CD4-positive, alpha-beta T cell (primary cell): ENCODE measurements at regions of chr3 and their contacts with region 1.

Region 1: GRCh38 chr3:100400780-100401673 is at the starts of genes LNP1 and TOMM70:
- DNase-seq: peak; percentile 86 to 97 (median 92)
- ATAC-seq: peak; percentile 88
- H3K4me3 ChIP-seq: peak within 1 kb of the TSS; percentile 73
- H3K4me3 Mint-ChIP-seq: peak within 1 kb of the TSS; percentile 94
- H3K27ac ChIP-seq: peak within 1 kb of the TSS; percentile 76 to 85
- H3K27ac Mint-ChIP-seq: peak within 1 kb of the TSS; percentile 92
- H3K4me1 ChIP-seq: peaks cover 26% of the 10 kb centered on the region
- H3K4me1 Mint-ChIP-seq: peaks cover 84% of the 10 kb centered on the region
- H3K27me3 ChIP-seq: no peaks in the 10 kb centered on the region
- H3K27me3 Mint-ChIP-seq: no peaks in the 10 kb centered on the region
- CTCF ChIP-seq: no peak
- total RNA-seq, gene LNP1: 0.47 to 0.70 TPM
- total RNA-seq, gene TOMM70: 20.9 to 21.6 TPM

Region 2: DNA sequence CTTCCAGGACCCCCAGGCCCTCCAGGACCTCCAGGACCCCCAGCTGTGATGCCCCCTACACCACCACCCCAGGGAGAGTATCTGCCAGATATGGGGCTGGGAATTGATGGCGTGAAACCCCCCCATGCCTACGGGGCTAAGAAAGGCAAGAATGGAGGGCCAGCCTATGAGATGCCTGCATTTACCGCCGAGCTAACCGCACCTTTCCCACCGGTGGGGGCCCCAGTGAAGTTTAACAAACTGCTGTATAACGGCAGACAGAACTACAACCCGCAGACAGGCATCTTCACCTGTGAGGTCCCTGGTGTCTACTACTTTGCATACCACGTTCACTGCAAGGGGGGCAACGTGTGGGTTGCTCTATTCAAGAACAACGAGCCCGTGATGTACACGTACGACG is 605.5 kb before region 1 on chr3:
- CTCF ChIA-PET with region 1: no interaction called
- POLR2A ChIA-PET with region 1: no interaction called
- intact Hi-C with region 1: no loop called
- DNase-seq: no peak
- ATAC-seq: no peak
- H3K4me3 ChIP-seq: no peak overlapping the region
- H3K4me3 Mint-ChIP-seq: no peak overlapping the region
- H3K27ac ChIP-seq: no peak overlapping the region
- H3K27ac Mint-ChIP-seq: no peak overlapping the region
- H3K4me1 ChIP-seq: no peaks in the 10 kb centered on the region
- H3K4me1 Mint-ChIP-seq: no peaks in the 10 kb centered on the region
- H3K27me3 ChIP-seq: no peaks in the 10 kb centered on the region
- H3K27me3 Mint-ChIP-seq: no peaks in the 10 kb centered on the region
- CTCF ChIP-seq: no peak

Region 3: GRCh38 chr3:99817437-99818240 is 583.4 kb before region 1 on chr3 and contains the start of gene CMSS1:
- CTCF ChIA-PET with region 1: no interaction called
- POLR2A ChIA-PET with region 1: interaction called, 7 read pairs
- intact Hi-C with region 1: loop called (anchors 1 to 10 kb)
- DNase-seq: peak; percentile 90 to 98 (median 96)
- ATAC-seq: peak; percentile 80
- H3K4me3 ChIP-seq: peak within 1 kb of the TSS; percentile 71
- H3K4me3 Mint-ChIP-seq: peak within 1 kb of the TSS; percentile 97
- H3K27ac ChIP-seq: peak within 1 kb of the TSS; percentile 76 to 86
- H3K27ac Mint-ChIP-seq: peak within 1 kb of the TSS; percentile 100
- H3K4me1 ChIP-seq: peaks cover 15% of the 10 kb centered on the region
- H3K4me1 Mint-ChIP-seq: peaks cover 48% of the 10 kb centered on the region
- H3K27me3 ChIP-seq: no peaks in the 10 kb centered on the region
- H3K27me3 Mint-ChIP-seq: no peaks in the 10 kb centered on the region
- CTCF ChIP-seq: no peak
- total RNA-seq, gene CMSS1: 12.2 TPM

Region 4: DNA sequence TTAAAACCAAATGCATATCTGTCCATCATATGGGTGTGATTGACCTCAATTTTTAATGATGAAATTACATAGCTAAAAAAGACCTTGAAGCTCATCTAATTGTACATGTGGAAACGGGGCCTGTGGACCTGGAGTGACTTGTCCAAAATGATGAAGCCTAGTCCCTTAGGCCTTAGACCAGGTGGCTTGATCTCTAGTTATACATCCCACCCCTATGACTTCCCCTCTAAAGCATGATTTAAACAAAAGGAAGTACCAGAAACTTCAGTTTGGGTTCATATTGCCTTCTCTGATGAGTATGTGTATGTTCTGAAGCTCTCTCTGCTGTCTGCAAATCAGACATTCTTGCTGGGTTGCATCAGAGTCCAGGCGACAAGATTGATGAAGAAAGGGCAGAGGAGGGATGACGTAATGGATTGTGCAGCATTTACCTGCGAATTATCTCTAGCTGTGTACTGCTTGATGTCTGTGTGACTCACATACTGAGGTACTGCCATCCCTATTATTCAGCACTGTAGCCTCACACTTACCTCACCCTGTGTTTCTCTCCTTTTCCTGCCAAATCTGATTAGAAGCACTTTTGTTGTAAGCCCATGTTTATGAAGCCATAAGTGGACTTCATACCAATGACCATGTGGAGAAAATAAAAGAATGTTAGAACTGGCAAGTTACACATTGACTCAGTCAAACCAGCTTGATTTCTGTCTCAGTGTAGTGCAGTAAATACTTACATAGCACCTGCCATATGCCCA is 398.3 kb before region 1 on chr3:
- CTCF ChIA-PET with region 1: no interaction called
- POLR2A ChIA-PET with region 1: no interaction called
- intact Hi-C with region 1: no loop called
- DNase-seq: no peak
- ATAC-seq: no peak
- H3K4me3 ChIP-seq: no peak overlapping the region
- H3K4me3 Mint-ChIP-seq: no peak overlapping the region
- H3K27ac ChIP-seq: no peak overlapping the region
- H3K27ac Mint-ChIP-seq: no peak overlapping the region
- H3K4me1 ChIP-seq: no peaks in the 10 kb centered on the region
- H3K4me1 Mint-ChIP-seq: no peaks in the 10 kb centered on the region
- H3K27me3 ChIP-seq: no peaks in the 10 kb centered on the region
- H3K27me3 Mint-ChIP-seq: no peaks in the 10 kb centered on the region
- CTCF ChIP-seq: no peak

Region 5: DNA sequence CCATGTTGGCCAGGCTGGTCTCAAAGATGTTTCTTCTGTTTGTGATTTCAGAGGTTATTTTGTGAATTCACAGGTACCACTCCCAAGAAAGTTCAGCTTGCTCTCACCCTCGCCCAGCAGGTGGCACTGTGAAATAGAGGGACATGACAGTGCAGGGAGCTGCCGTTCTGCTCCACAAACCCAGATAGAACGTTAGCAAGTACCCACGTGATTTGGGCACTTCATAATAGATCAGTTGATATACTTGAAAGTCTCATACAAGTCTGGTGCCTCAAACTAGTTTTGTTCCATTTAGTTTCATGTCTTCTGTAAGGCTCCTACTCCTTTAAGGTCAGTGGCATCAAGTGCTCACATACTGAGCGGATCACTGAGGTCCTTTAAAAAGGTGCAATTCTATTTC is 332.2 kb before region 1 on chr3:
- CTCF ChIA-PET with region 1: no interaction called
- POLR2A ChIA-PET with region 1: no interaction called
- intact Hi-C with region 1: no loop called
- DNase-seq: peak; percentile 57 to 84 (median 68)
- ATAC-seq: peak; percentile 98
- H3K4me3 ChIP-seq: no peak overlapping the region
- H3K4me3 Mint-ChIP-seq: no peak overlapping the region
- H3K27ac ChIP-seq: no peak overlapping the region
- H3K27ac Mint-ChIP-seq: no peak overlapping the region
- H3K4me1 ChIP-seq: peaks cover 14% of the 10 kb centered on the region
- H3K4me1 Mint-ChIP-seq: peaks cover 39% of the 10 kb centered on the region
- H3K27me3 ChIP-seq: no peaks in the 10 kb centered on the region
- H3K27me3 Mint-ChIP-seq: no peaks in the 10 kb centered on the region
- CTCF ChIP-seq: peak; percentile 76

Region 6: GRCh38 chr3:100334488-100335351 is 66.3 kb before region 1 on chr3 and contains the start of gene NIT2:
- CTCF ChIA-PET with region 1: no interaction called
- POLR2A ChIA-PET with region 1: interaction called, 28 read pairs
- intact Hi-C with region 1: loop called (anchors 2 to 5 kb)
- DNase-seq: peak; percentile 59 to 91 (median 74)
- ATAC-seq: peak; percentile 94
- H3K4me3 ChIP-seq: peak within 1 kb of the TSS; percentile 81
- H3K4me3 Mint-ChIP-seq: peak within 1 kb of the TSS; percentile 93
- H3K27ac ChIP-seq: peak within 1 kb of the TSS; percentile 29 to 70
- H3K27ac Mint-ChIP-seq: peak within 1 kb of the TSS; percentile 83
- H3K4me1 ChIP-seq: peaks cover 17% of the 10 kb centered on the region
- H3K4me1 Mint-ChIP-seq: peaks cover 30% of the 10 kb centered on the region
- H3K27me3 ChIP-seq: no peaks in the 10 kb centered on the region
- H3K27me3 Mint-ChIP-seq: no peaks in the 10 kb centered on the region
- CTCF ChIP-seq: no peak
- total RNA-seq, gene NIT2: 18.6 to 21.4 TPM

Region 7: DNA sequence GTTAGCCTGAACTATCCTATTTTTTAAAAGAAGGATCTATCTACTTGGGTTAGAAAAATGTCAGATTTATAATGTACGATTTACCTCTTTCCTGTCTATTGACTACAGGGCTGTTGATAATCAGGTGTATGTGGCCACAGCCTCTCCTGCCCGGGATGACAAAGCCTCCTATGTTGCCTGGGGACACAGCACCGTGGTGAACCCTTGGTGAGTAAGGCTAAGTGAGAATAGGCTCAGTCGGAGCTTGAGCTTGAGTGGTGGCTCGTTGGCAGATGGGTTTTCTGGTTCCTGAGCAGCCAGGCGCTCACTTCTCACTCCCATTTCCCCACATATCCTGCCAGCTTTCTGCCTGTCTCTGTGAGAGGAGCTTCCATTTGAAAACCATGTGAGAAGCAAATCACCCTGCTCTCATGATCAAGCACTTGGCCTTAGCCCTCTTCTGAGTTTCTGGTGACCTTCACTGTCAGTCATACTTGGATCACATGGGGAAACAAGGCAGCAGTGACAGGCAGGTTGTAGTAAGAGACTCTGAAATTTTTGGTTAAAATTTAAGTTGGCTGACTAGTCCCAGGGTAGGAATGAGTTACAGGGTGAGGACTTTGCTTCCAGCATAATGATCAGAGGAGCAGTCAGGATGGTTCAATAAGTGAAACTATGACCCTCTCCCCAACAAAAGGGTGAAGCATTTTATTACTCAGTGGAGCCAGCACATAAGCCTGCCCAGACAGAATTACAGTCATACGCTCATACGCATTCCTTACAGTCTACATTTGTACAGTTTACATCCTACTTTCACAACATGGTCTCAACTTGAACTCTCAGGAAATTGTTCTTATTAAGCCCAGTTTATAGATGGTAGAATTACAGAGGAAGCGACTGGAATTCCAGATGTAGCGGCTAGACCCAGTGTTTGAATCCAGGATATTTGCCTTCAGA is 48.5 kb before region 1 on chr3:
- CTCF ChIA-PET with region 1: no interaction called
- POLR2A ChIA-PET with region 1: no interaction called
- intact Hi-C with region 1: no loop called
- DNase-seq: no peak
- ATAC-seq: no peak
- H3K4me3 ChIP-seq: no peak overlapping the region
- H3K4me3 Mint-ChIP-seq: no peak overlapping the region
- H3K27ac ChIP-seq: no peak overlapping the region
- H3K27ac Mint-ChIP-seq: no peak overlapping the region
- H3K4me1 ChIP-seq: no peaks in the 10 kb centered on the region
- H3K4me1 Mint-ChIP-seq: no peaks in the 10 kb centered on the region
- H3K27me3 ChIP-seq: no peaks in the 10 kb centered on the region
- H3K27me3 Mint-ChIP-seq: no peaks in the 10 kb centered on the region
- CTCF ChIP-seq: no peak

Region 8: GRCh38 chr3:100386437-100387074 is 14.5 kb before region 1 on chr3:
- CTCF ChIA-PET with region 1: no interaction called
- POLR2A ChIA-PET with region 1: interaction called, 15 read pairs
- intact Hi-C with region 1: no loop called
- DNase-seq: no peak
- ATAC-seq: no peak
- H3K4me3 ChIP-seq: no peak overlapping the region
- H3K4me3 Mint-ChIP-seq: no peak overlapping the region
- H3K27ac ChIP-seq: no peak overlapping the region
- H3K27ac Mint-ChIP-seq: no peak overlapping the region
- H3K4me1 ChIP-seq: no peaks in the 10 kb centered on the region
- H3K4me1 Mint-ChIP-seq: peaks cover 17% of the 10 kb centered on the region
- H3K27me3 ChIP-seq: no peaks in the 10 kb centered on the region
- H3K27me3 Mint-ChIP-seq: no peaks in the 10 kb centered on the region
- CTCF ChIP-seq: no peak

Region 9: GRCh38 chr3:100492059-100493006 is 91.3 kb after region 1 on chr3 and contains the start of gene TMEM45A:
- CTCF ChIA-PET with region 1: no interaction called
- POLR2A ChIA-PET with region 1: no interaction called
- intact Hi-C with region 1: loop called in 1 of 2 experiments (anchors 2 kb)
- DNase-seq: peak; percentile 20 to 82 (median 60)
- ATAC-seq: peak; percentile 98
- H3K4me3 ChIP-seq: peak within 1 kb of the TSS; percentile 60
- H3K4me3 Mint-ChIP-seq: peak within 1 kb of the TSS; percentile 87
- H3K27ac ChIP-seq: no peak within 1 kb of the TSS
- H3K27ac Mint-ChIP-seq: no peak within 1 kb of the TSS
- H3K4me1 ChIP-seq: peaks cover 10% of the 10 kb centered on the region
- H3K4me1 Mint-ChIP-seq: peaks cover 15% of the 10 kb centered on the region
- H3K27me3 ChIP-seq: peaks cover 0 to 6% of the 10 kb centered on the region in 2 experiments
- H3K27me3 Mint-ChIP-seq: peaks cover 23% of the 10 kb centered on the region
- CTCF ChIP-seq: no peak
- total RNA-seq, gene TMEM45A: 0.08 TPM in 1 of 2 experiments, not detected in the other

Region 10: DNA sequence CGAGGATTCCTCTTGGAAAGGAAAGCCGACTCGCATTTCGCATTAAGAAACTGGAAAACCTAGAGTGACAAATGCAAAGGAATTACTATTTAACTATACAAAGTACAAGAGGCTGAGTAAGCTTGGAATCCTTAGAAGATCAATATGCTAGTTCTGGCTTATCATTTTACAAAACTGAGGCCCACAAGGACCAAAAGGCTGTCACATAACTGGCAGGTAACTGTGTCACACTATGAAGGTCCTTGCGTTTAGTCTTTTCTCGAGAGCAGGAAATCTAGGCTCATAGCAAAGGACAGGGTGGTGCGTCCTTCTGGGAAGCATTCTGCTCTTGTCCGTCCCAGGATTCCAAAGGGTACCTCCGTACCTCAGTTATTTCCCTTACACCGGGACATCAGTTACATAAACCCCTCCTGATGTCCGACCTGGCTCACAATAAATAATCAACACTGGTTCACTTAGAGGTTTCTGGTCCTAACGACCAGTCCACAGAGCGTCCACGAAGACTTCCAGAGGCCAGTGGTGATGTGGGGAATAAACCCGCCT is 1284.9 kb after region 1 on chr3:
- CTCF ChIA-PET with region 1: no interaction called
- POLR2A ChIA-PET with region 1: no interaction called
- intact Hi-C with region 1: loop called in 1 of 2 experiments (anchors 10 kb)
- DNase-seq: peak in 4 of 14 experiments; percentile 7 to 40 (median 26)
- ATAC-seq: peak; percentile 5
- H3K4me3 ChIP-seq: peak overlapping the region; percentile 91
- H3K4me3 Mint-ChIP-seq: peak overlapping the region; percentile 99
- H3K27ac ChIP-seq: peak overlapping the region; percentile 87 to 94
- H3K27ac Mint-ChIP-seq: peak overlapping the region; percentile 99
- H3K4me1 ChIP-seq: peaks cover 30% of the 10 kb centered on the region
- H3K4me1 Mint-ChIP-seq: peaks cover 49% of the 10 kb centered on the region
- H3K27me3 ChIP-seq: no peaks in the 10 kb centered on the region
- H3K27me3 Mint-ChIP-seq: no peaks in the 10 kb centered on the region
- CTCF ChIP-seq: no peak